ENCODE measurements at regions of chr7 and their contacts with region 1.

Region 1: GRCh38 chr7:155298834-155299534 is 1.3 kb downstream of the INSIG1 start:
- DNase-seq: peak; percentile 95
- H3K4me3 ChIP-seq: peak overlapping the region; percentile 93
- H3K27ac ChIP-seq: peak overlapping the region; percentile 83
- H3K4me1 ChIP-seq: peaks cover 36% of the 10 kb centered on the region
- CTCF ChIP-seq: no peak

Region 2: DNA sequence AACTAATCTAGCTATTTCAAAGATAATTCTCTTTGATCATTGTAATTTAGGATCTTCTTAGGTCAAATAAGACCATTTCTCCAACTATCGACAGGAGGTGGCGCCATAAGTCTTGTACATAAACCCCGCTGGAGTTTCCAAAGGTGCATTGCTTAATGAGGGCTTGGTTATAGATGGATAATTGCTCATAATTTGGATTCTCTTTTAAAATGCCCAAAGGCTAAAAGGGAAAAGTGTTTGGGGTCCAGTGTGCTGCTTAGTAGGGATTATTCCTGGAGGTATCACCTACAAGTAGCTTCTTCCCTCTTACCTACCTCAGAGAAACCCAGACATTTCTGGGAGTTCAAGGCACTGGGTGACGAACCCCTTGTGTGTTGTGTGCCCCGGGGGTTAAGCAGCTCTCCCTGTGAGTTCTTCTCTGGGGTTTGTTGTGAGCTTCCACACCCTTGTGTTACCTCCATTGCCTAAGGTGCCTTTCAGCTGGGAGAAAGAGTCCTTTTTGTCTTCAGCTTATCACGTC is 371.3 kb before region 1 on chr7:
- CTCF ChIA-PET with region 1: no interaction called
- POLR2A ChIA-PET with region 1: interaction called, 4 read pairs
- intact Hi-C with region 1: loop called (anchors 5 kb)
- DNase-seq: peak; percentile 91
- H3K4me3 ChIP-seq: peak overlapping the region; percentile 76
- H3K27ac ChIP-seq: peak overlapping the region; percentile 33
- H3K4me1 ChIP-seq: peaks cover 10% of the 10 kb centered on the region
- CTCF ChIP-seq: peak; percentile 94

Region 3: DNA sequence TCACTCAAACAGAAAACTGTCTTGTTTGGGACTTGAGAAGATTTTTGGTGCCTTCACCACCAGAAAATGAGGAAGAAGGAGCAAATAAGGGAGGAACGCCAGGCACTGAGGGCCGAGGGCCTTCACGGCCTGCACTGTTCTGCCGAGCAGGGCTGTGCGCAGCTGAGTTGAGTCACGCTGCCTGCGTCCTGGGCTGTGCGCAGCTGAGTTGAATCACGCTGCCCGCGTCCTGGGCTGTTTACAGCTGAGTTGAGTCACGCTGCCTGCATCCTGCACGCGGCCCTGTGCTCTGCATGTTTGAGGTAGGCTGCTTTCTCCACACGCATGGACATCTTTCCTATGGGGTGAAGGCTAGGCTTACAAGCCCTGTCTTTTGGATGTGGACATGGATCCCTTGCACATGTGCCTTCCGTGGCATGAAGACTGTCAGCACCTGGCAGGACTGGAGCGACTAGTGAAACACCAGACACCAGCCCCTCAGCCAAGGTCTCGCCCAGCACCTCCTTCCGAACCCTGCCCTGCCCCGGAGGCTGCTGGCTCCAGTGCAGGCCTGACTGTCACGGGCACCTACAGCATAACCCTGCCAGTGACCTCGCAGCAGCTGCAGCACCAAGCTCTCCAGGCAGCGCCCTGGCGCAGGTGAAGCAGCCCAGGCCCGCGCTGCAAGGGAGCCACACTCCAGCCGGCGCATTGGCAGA is 132.2 kb before region 1 on chr7:
- CTCF ChIA-PET with region 1: no interaction called
- POLR2A ChIA-PET with region 1: no interaction called
- intact Hi-C with region 1: no loop called
- DNase-seq: peak; percentile 30
- H3K4me3 ChIP-seq: no peak overlapping the region
- H3K27ac ChIP-seq: no peak overlapping the region
- H3K4me1 ChIP-seq: no peaks in the 10 kb centered on the region
- CTCF ChIP-seq: no peak

Region 4: GRCh38 chr7:155190688-155191087 is 108.3 kb before region 1 on chr7:
- CTCF ChIA-PET with region 1: no interaction called
- POLR2A ChIA-PET with region 1: no interaction called
- intact Hi-C with region 1: loop called (anchors 1 kb)
- DNase-seq: peak; percentile 44
- H3K4me3 ChIP-seq: no peak overlapping the region
- H3K27ac ChIP-seq: no peak overlapping the region
- H3K4me1 ChIP-seq: no peaks in the 10 kb centered on the region
- CTCF ChIP-seq: peak; percentile 86

Region 5: GRCh38 chr7:155344600-155345433 is 45.8 kb after region 1 on chr7:
- CTCF ChIA-PET with region 1: no interaction called
- POLR2A ChIA-PET with region 1: no interaction called
- intact Hi-C with region 1: loop called (anchors 1 kb)
- DNase-seq: peak; percentile 69
- H3K4me3 ChIP-seq: peak overlapping the region; percentile 69
- H3K27ac ChIP-seq: no peak overlapping the region
- H3K4me1 ChIP-seq: no peaks in the 10 kb centered on the region
- CTCF ChIP-seq: peak; percentile 85

Region 6: DNA sequence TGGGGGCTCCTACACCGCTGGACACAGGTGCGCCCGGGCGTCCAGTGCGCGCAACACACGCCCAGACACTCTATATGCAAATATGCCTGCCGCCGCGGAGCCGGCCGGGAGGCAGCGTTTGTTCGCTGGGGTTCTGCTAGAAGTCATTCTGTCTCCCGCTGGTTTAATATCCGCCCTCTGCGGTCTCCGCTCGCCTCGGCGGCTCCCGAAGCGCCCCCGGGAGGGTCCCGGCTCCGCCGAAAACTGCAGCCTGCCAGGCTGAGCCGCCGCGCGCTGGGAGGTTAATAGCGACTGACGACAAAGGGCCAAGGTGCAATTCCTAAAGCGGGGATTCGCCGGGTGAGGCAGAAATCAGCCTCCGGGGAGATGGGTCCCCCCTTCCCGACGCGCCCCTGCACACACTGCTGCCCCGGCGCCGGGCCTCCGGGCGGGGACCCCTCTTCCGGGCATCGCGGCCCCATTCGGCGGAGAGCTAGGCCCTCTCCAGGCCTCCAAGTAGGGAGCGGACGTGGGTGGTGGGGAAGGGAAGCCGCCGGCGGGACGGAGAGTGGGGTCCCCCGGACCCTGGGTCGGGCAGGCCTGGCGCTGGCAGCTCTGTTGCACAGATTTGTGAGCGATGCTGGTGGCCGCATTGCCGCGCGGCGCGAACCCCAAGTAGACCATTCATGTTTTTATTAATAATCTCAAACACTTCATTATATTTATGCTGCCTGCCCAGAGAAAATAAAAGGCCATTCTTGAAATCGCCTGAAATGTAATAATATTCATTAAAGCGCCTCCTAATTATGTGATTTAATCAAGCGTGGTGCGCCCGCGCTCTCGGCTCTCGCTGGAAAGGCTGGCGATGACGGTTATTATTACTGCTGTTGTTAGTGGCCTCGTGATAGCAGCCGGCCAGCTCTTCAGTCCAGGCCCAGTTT is 168.1 kb after region 1 on chr7:
- CTCF ChIA-PET with region 1: no interaction called
- POLR2A ChIA-PET with region 1: no interaction called
- intact Hi-C with region 1: no loop called
- DNase-seq: no peak
- H3K4me3 ChIP-seq: no peak overlapping the region
- H3K27ac ChIP-seq: no peak overlapping the region
- H3K4me1 ChIP-seq: no peaks in the 10 kb centered on the region
- CTCF ChIP-seq: no peak

Region 7: GRCh38 chr7:155724327-155725005 is 425.5 kb after region 1 on chr7:
- CTCF ChIA-PET with region 1: no interaction called
- POLR2A ChIA-PET with region 1: no interaction called
- intact Hi-C with region 1: loop called (anchors 5 kb)
- DNase-seq: peak; percentile 75
- H3K4me3 ChIP-seq: peak overlapping the region; percentile 59
- H3K27ac ChIP-seq: peak overlapping the region; percentile 96
- H3K4me1 ChIP-seq: peaks cover 90% of the 10 kb centered on the region
- CTCF ChIP-seq: peak; percentile 73

Measured in OCI-LY7 (cell line).